ENCODE measurements at regions of chr3 and their contacts with region 1.

Region 1: GRCh38 chr3:185717627-185718402 is 107.0 kb downstream of the IGF2BP2 start:
- DNase-seq: no peak
- ATAC-seq: no peak
- H3K4me3 ChIP-seq: no peak overlapping the region
- H3K27ac ChIP-seq: no peak overlapping the region
- H3K4me1 ChIP-seq: peaks cover 20% of the 10 kb centered on the region
- H3K27me3 ChIP-seq: no peaks in the 10 kb centered on the region
- CTCF ChIP-seq: no peak

Region 2: GRCh38 chr3:183734750-183735494 is 1982.9 kb before region 1 on chr3:
- CTCF ChIA-PET with region 1: no interaction called
- POLR2A ChIA-PET with region 1: no interaction called
- in situ Hi-C with region 1: no loop called
- intact Hi-C with region 1: no loop called
- DNase-seq: no peak
- ATAC-seq: no peak
- H3K4me3 ChIP-seq: no peak overlapping the region
- H3K27ac ChIP-seq: no peak overlapping the region
- H3K4me1 ChIP-seq: no peaks in the 10 kb centered on the region
- H3K27me3 ChIP-seq: no peaks in the 10 kb centered on the region
- CTCF ChIP-seq: no peak

Region 3: DNA sequence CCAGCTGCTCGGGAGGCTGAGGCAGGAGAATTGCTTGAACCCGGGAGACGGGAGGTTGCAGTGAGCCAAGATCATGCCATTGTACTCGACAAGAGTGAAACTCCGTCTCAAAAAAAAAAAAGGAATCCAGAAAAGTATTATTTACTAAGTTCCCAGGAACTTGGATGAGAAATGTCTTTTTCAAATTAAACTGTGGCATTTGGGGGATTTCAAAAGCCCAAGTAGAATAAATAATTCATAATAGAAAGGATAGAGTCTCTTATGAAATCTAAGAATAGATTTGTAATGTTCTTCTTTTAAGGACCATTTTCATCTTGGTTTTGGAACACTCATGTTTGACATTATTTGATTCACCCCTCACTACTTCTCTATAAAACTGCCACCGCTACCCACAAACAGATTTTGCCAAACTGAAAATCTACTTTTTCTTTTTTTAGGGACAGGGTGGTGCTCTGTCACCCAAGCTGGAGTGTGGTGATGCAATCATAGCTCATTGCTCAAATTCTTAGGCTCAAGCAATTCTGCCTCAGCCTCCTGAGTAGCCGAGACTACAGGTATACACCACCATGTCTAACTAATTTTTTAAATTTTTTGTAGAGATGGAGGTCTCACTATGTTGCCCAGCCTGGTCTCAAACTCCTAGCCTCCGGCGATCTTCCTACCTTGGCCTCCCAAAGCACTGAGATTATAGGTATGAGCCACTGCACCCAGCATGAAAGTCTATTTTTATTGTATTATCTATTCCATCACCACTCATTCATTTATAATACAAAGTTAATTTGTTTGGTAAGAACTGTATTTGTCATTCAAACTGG is 32.4 kb before region 1 on chr3:
- CTCF ChIA-PET with region 1: no interaction called
- POLR2A ChIA-PET with region 1: interaction called, 10 read pairs
- in situ Hi-C with region 1: no loop called
- intact Hi-C with region 1: no loop called
- DNase-seq: no peak
- ATAC-seq: no peak
- H3K4me3 ChIP-seq: no peak overlapping the region
- H3K27ac ChIP-seq: no peak overlapping the region
- H3K4me1 ChIP-seq: peaks cover 16% of the 10 kb centered on the region
- H3K27me3 ChIP-seq: no peaks in the 10 kb centered on the region
- CTCF ChIP-seq: no peak

Region 4: DNA sequence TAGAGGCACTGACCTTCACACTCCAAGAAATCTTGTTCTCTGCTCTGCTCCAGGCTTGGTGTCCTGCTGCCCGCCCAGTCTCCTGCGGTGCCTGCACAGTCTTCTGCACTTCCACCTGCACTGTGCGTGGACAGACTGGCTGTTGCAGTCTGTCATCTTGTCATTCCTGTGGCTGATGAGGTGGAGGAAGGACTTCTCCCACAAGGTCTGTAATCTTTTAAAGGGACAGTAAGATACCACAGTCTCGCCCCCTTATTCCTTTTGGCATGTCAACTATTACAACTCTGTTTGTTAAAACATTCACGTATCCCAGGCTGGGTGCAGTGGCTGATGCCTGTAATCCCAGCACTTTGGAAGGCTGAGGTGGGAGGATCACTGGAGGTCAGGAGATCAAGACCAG is 161.1 kb after region 1 on chr3:
- CTCF ChIA-PET with region 1: no interaction called
- POLR2A ChIA-PET with region 1: no interaction called
- in situ Hi-C with region 1: no loop called
- intact Hi-C with region 1: no loop called
- DNase-seq: no peak
- ATAC-seq: peak; percentile 50; the same call in 1 of the 2 replicates
- H3K4me3 ChIP-seq: no peak overlapping the region
- H3K27ac ChIP-seq: no peak overlapping the region
- H3K4me1 ChIP-seq: no peaks in the 10 kb centered on the region
- H3K27me3 ChIP-seq: no peaks in the 10 kb centered on the region
- CTCF ChIP-seq: no peak

Region 5: DNA sequence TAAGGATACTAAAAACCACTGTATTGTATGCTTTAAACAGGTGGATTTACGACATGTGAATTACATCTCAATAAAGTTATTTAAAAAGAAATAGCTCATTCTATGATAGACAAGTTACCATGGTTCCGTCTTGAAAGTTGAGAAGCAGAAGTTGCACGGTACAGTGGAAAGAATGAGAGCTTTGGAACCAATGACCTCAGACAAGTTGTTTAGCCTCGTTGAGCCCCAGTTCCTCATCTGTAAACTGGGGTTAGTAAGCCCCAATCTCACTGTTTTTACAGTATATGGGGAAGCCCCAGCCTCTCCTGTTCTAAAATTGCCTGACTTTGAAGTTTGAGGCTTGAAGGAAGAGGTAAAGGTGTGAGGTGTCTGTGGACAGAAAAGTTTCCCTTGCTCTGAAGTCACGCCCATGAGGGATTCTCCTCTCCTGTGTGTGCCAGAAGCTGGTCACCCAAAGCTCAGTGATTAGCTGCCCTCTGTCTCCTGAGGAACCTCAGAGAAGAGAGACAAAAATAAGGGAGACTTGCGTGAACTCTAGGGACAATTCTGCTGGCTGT is 816.4 kb after region 1 on chr3:
- CTCF ChIA-PET with region 1: no interaction called
- POLR2A ChIA-PET with region 1: no interaction called
- in situ Hi-C with region 1: no loop called
- intact Hi-C with region 1: no loop called
- DNase-seq: no peak
- ATAC-seq: no peak
- H3K4me3 ChIP-seq: no peak overlapping the region
- H3K27ac ChIP-seq: no peak overlapping the region
- H3K4me1 ChIP-seq: no peaks in the 10 kb centered on the region
- H3K27me3 ChIP-seq: no peaks in the 10 kb centered on the region; the same call in 1 of the 2 replicates
- CTCF ChIP-seq: no peak